Breast epithelium (tissue), 4 donors: ENCODE measurements at regions of chr1 and their contacts with region 1.

Region 1: GRCh38 chr1:18200136-18200717 is 92.6 kb downstream of the IGSF21 start:
- DNase-seq: no peak
- H3K4me3 ChIP-seq: no peak overlapping the region
- H3K27ac ChIP-seq: no peak overlapping the region
- H3K4me1 ChIP-seq: no peaks in the 10 kb centered on the region
- H3K27me3 ChIP-seq: peaks cover 0 to 36% of the 10 kb centered on the region in 2 donors
- CTCF ChIP-seq: no peak
- POLR2A ChIP-seq: no peak

Region 2: DNA sequence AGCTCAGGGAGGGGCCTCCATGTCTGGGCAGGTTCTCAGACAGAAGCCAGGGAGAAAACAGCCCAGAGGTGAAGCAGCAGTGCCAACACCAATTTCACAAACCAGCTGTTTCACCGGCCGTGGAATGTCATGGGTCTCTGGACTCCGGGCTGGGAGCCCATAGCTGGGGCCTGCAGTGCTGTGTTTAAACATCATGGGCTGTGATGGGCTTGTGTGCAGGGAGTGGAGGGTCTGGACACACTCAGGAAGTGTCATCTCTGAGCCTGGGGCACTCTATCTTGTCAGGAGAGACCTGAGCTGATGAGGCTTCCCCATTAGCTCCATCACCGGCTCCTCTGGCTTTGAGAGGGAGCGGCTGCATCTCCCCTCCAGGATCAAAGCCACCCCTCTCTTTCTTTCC is 266.3 kb before region 1 on chr1:
- intact Hi-C with region 1: loop called (anchors 5 kb)
- DNase-seq: peak in 1 of 2 donors; percentile 20
- H3K4me3 ChIP-seq: no peak overlapping the region
- H3K27ac ChIP-seq: no peak overlapping the region
- H3K4me1 ChIP-seq: no peaks in the 10 kb centered on the region
- H3K27me3 ChIP-seq: peaks cover 0 to 9% of the 10 kb centered on the region in 2 donors
- CTCF ChIP-seq: no peak
- POLR2A ChIP-seq: no peak

Region 3: GRCh38 chr1:18320006-18320405 is 119.8 kb after region 1 on chr1:
- intact Hi-C with region 1: no loop called
- DNase-seq: no peak
- H3K4me3 ChIP-seq: no peak overlapping the region
- H3K27ac ChIP-seq: peak overlapping the region; percentile 5 to 45
- H3K4me1 ChIP-seq: no peaks in the 10 kb centered on the region
- H3K27me3 ChIP-seq: peaks cover 0 to 6% of the 10 kb centered on the region in 2 donors
- CTCF ChIP-seq: no peak
- POLR2A ChIP-seq: no peak

Region 4: DNA sequence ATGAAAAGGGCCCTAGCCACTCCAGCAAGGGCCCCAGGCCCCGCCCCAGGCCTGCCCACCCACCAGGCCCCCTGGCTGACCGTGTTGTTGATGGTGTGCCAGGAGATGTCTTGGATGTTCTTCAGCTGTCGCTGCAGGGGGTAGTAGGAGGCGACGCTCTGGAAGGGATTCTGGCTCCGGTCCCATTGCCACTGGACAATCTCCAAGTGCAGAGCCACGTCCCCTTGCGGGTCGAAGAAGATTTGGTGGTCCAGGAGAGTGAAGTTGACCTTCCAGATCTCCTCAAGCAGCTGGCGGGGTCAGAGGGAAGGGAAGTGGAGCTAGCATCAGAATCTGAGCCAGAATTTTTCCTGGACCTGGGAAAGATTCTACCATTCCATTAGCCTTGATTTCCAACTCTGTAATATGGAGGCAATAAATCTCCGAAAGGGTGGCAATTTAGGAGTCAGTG is 649.1 kb after region 1 on chr1:
- intact Hi-C with region 1: no loop called
- DNase-seq: no peak
- H3K4me3 ChIP-seq: no peak overlapping the region
- H3K27ac ChIP-seq: no peak overlapping the region
- H3K4me1 ChIP-seq: no peaks in the 10 kb centered on the region
- H3K27me3 ChIP-seq: no peaks in the 10 kb centered on the region
- CTCF ChIP-seq: no peak
- POLR2A ChIP-seq: no peak